ENCODE measurements at regions of chr9 and their contacts with region 1.

Region 1: GRCh38 chr9:33737811-33738606 is 57.4 kb upstream of the PRSS3 start:
- DNase-seq: peak; percentile 60
- H3K4me3 ChIP-seq: no peak overlapping the region
- H3K27ac ChIP-seq: no peak overlapping the region
- H3K4me1 ChIP-seq: no peaks in the 10 kb centered on the region
- H3K27me3 ChIP-seq: no peaks in the 10 kb centered on the region
- CTCF ChIP-seq: peak; percentile 71

Region 2: DNA sequence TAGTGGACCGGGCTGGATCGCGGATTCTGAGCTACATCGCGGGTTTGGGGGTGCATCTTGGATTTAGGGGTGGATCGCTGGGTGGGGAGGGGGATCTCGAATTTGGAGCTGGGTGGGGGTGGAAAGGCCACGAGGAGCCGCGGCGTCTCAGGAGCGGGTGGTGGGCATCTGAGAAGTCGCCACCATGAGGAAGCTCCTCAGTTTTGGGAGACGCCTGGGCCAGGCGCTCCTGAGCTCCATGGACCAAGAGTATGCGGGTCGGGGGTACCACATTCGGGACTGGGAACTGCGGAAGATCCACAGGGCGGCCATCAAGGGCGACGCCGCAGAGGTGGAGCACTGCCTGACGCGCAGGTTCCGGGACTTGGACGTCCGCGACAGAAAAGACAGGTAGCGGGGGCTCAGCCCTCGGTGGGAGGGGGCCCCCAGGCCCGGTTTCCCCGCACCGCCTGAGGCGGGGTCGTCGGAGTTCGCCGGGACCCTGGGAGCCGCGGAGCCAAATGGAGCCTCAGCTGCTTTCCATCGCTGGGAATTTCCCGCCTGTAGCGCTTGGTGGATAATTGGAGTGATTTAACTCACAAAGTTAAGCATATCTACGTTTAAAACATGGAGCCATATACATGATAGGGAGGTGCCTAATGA is 213.6 kb before region 1 on chr9:
- CTCF ChIA-PET with region 1: no interaction called
- POLR2A ChIA-PET with region 1: no interaction called
- intact Hi-C with region 1: no loop called
- DNase-seq: no peak
- H3K4me3 ChIP-seq: peak overlapping the region; percentile 25
- H3K27ac ChIP-seq: no peak overlapping the region
- H3K4me1 ChIP-seq: peaks cover 4% of the 10 kb centered on the region
- H3K27me3 ChIP-seq: peaks cover 75% of the 10 kb centered on the region
- CTCF ChIP-seq: no peak

Region 3: GRCh38 chr9:33778700-33779351 is 40.8 kb after region 1 on chr9:
- CTCF ChIA-PET with region 1: interaction called, 43 read pairs
- POLR2A ChIA-PET with region 1: no interaction called
- intact Hi-C with region 1: loop called (anchors 5 kb)
- DNase-seq: peak; percentile 72
- H3K4me3 ChIP-seq: no peak overlapping the region
- H3K27ac ChIP-seq: no peak overlapping the region
- H3K4me1 ChIP-seq: no peaks in the 10 kb centered on the region
- H3K27me3 ChIP-seq: no peaks in the 10 kb centered on the region
- CTCF ChIP-seq: peak; percentile 83

Region 4: GRCh38 chr9:34025811-34026210 is 287.8 kb after region 1 on chr9:
- CTCF ChIA-PET with region 1: interaction called, 14 read pairs
- POLR2A ChIA-PET with region 1: no interaction called
- intact Hi-C with region 1: no loop called
- DNase-seq: no peak
- H3K4me3 ChIP-seq: no peak overlapping the region
- H3K27ac ChIP-seq: no peak overlapping the region
- H3K4me1 ChIP-seq: no peaks in the 10 kb centered on the region
- H3K27me3 ChIP-seq: no peaks in the 10 kb centered on the region
- CTCF ChIP-seq: no peak

Measured in A673 (cell line).